ENCODE measurements at regions of chr18 and their contacts with region 1.

Region 1: DNA sequence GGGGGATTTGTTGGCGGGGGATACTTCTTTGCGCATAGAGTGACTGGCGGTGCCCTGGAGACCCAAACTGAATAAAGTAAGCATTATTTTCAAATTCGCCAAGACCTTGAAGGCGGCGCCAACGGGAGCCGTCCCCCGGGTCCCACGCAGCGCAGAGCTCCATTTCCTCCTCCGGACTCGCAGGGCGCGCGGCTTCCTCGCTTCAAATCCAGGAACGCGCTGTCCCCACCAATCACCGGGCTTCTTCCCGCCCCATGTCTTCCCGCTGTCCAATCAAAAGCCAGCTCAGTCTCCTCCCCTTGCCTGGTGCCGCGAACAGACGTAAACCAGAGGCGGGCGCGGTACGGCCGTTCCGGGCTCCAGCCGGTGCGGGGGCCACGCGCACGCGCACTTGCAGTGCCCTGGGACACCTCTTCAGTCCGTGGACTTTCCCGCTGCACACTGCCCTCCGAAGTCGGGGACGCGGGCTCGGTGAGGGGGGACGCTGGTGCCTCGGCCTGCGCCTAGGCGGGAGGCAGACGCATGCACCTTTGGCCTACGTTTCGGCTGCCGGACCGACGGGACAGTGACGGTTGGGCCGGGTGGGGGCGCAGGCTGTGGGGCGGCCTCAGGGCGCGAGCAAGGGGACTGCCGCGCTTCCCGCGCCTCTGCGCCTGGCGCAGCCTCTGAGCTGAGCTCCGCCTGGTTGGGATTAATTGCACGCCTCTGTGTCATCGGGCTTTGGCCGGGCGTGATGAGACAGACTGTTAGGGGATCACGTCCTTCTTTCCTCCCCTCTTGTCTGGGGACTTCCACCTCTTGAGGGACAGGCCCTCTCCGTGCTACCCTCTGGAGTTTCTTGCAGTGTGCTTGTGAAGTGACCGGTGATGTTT is at the start of gene CEP192:
- DNase-seq: peak; percentile 96
- ATAC-seq: peak; percentile 93
- H3K4me3 Mint-ChIP-seq: peak within 1 kb of the TSS; percentile 100
- H3K27ac Mint-ChIP-seq: peak within 1 kb of the TSS; percentile 87
- H3K4me1 Mint-ChIP-seq: peaks cover 15% of the 10 kb centered on the region
- H3K27me3 Mint-ChIP-seq: no peaks in the 10 kb centered on the region
- total RNA-seq, gene CEP192: 49.8 to 50.6 TPM

Region 2: DNA sequence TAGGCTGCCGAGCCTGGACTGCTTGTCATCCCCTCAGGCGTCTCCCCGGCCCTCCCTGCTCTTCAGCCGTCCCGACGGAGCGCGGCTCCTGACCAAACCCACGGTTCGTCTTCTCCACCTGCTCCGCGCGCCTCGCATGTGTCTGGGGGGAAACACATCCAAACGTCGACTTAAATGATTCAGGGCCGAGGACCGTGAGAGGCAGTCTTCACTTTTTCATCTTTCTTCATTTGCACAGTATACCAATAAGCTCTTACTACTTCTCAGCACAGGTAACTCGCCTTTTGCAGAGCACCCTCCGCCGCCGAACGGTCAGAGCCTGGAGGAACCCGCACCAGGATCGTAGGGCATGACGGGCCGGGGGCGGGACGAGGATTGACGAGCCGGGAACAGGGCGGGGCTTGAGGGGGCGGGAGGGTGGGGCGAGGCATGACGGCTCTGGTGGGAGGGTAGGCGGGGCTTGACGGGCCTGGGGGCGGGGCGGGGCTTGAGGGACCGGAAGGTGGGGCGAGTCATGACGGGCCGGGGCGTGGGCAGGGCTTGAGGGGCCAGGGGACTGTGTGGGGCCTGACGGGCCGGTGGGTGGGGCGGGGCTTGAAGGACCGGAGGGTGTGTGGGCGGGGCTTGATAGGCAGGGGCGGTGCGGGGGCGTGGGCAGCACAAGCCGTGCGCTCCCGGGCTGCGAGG is 43.7 kb before region 1 on chr18 and contains the start of gene SEH1L:
- POLR2A ChIA-PET with region 1: interaction called, 37 read pairs
- DNase-seq: peak; percentile 97
- ATAC-seq: peak; percentile 88
- H3K4me3 Mint-ChIP-seq: peak within 1 kb of the TSS; percentile 98
- H3K27ac Mint-ChIP-seq: peak within 1 kb of the TSS; percentile 99
- H3K4me1 Mint-ChIP-seq: peaks cover 33% of the 10 kb centered on the region
- H3K27me3 Mint-ChIP-seq: no peaks in the 10 kb centered on the region
- total RNA-seq, gene SEH1L: 38.0 to 43.5 TPM

Region 3: DNA sequence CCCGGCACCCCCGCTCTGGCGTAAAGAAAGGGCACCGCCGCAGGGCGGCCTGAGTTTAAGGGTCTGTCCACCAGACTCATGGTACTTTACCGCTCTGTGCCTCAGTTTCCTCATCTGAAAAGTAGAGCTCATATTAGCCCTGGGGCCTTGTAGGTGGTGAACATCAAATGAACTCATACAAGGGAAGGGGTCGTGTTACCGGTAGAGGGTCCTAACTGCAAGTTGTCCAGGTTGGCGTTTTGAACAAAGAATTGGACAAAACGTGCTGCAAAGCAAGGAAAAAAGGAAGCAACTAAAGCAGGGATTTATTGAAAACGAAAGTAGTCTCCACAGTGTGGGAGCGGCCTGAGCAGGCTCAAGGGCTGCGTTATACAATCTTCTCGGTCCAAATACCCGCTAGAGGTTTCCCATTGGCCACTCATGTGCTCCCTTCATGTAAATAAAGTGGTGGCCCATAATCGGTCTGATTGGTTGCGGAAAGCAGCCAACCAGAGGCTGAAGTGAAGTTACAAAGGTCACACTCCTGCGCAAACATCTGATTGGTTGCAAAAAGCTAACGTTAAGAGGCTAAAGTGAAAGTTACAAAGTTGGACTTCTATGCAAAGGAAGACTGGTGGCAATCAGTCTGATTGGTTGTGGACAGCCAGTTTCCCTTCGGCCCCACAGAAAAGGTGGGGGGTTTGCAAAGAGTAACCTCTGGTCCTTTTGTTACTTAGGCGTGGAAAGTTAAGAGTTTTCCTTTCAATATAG is 146.6 kb after region 1 on chr18:
- POLR2A ChIA-PET with region 1: interaction called, 13 read pairs
- DNase-seq: peak; percentile 66
- ATAC-seq: peak; percentile 92
- H3K4me3 Mint-ChIP-seq: peak overlapping the region; percentile 98
- H3K27ac Mint-ChIP-seq: peak overlapping the region; percentile 98
- H3K4me1 Mint-ChIP-seq: peaks cover 26% of the 10 kb centered on the region
- H3K27me3 Mint-ChIP-seq: no peaks in the 10 kb centered on the region